ENCODE measurements at regions of chr2 and their contacts with region 1.

Region 1: DNA sequence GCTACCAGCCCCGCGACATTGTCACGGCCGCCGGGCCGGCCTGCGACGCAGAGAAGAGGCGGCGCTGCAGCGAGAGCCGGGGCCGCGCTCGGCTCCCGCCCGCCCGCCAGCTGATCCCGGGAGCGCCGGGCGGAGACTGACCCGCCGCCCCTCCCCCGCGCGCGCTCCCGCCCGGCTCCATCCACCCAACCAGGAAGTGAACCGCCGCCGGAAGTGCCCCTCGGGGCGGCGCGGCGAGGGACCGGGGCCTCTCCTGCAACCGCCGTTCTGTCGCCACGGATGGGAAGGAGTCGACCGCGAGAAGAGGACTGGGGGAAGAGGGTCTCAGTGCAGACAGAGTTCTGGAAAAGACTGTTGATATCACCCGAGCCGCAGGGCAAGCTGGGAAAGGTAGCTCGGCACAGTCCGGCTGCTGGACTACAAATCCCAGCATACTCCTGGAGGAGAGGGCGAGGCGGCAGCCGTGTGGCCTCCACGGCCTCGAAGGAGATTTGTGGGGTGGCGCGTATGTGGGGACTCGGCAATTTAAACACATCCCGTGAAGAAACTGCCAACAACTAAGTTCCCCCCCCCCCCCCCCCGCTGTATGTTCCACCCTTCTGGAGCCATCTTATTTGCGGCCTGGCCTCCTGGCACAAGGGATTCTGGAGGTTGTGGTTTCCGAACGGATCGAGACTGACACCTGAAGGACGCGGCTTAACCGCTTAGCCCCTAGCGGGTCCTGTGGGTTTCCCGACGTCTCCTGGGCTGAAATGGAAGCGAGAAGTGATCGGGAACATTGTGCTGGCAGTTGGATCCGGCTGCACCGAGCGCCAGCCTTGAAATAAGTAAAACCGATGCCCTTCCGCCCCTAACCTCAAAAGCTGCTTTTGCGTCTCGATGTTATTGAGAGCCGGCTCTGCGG is at the start of gene AAK1:
- DNase-seq: peak; percentile 64 to 91 (median 78)
- ATAC-seq: peak; percentile 40
- H3K4me3 ChIP-seq: peak within 1 kb of the TSS; percentile 85
- H3K4me3 Mint-ChIP-seq: peak within 1 kb of the TSS; percentile 99
- H3K27ac ChIP-seq: peak within 1 kb of the TSS; percentile 87 to 90
- H3K27ac Mint-ChIP-seq: peak within 1 kb of the TSS; percentile 95
- H3K4me1 ChIP-seq: peaks cover 56% of the 10 kb centered on the region
- H3K4me1 Mint-ChIP-seq: peaks cover 67% of the 10 kb centered on the region
- H3K27me3 ChIP-seq: no peaks in the 10 kb centered on the region
- H3K27me3 Mint-ChIP-seq: no peaks in the 10 kb centered on the region
- CTCF ChIP-seq: no peak
- total RNA-seq, gene AAK1: 201 to 208 TPM

Region 2: DNA sequence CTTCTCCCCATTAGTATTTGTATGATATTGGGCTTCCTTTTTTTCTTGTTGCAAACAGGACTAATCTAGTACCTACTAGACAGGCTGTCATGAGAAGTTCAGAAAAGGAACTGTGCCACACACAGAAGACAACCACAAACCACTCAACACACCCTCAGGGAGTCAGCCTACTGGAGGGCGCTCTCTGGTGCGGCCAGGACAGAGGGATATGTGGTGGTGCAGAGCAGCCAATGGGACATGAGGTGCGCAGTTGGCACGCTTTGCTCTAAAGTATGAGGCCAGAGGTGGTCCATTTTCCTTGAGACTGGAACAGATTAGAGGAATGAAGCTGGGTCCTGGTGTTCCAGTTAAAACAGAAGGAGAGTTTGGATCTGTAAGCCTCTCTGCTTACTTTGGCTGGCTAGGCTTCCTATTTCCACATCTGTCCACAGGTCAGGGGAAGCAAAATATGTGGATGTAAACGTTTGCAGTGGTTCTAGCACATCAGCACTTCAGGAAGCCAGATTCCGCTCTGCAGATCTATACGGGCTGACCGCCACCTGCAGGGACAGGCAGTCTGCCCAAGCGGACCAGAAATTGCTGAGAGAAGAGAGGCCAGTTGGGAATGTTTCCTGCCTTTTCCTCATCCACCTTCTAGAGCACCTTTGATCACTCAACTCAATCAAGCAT is 370.9 kb before region 1 on chr2:
- CTCF ChIA-PET with region 1: no interaction called
- POLR2A ChIA-PET with region 1: no interaction called
- intact Hi-C with region 1: no loop called
- DNase-seq: peak in 2 of 14 experiments; percentile 1 to 12
- ATAC-seq: no peak
- H3K4me3 ChIP-seq: no peak overlapping the region
- H3K4me3 Mint-ChIP-seq: no peak overlapping the region
- H3K27ac ChIP-seq: no peak overlapping the region
- H3K27ac Mint-ChIP-seq: no peak overlapping the region
- H3K4me1 ChIP-seq: no peaks in the 10 kb centered on the region
- H3K4me1 Mint-ChIP-seq: no peaks in the 10 kb centered on the region
- H3K27me3 ChIP-seq: peaks cover 12 to 19% of the 10 kb centered on the region in 2 experiments
- H3K27me3 Mint-ChIP-seq: peaks cover 51% of the 10 kb centered on the region
- CTCF ChIP-seq: no peak

Region 3: GRCh38 chr2:69386789-69387734 is 256.8 kb before region 1 on chr2 and contains the start of gene GFPT1:
- CTCF ChIA-PET with region 1: no interaction called
- POLR2A ChIA-PET with region 1: no interaction called
- intact Hi-C with region 1: loop called in 1 of 2 experiments (anchors 10 kb)
- DNase-seq: peak; percentile 84 to 97 (median 92)
- ATAC-seq: peak; percentile 97
- H3K4me3 ChIP-seq: peak within 1 kb of the TSS; percentile 62
- H3K4me3 Mint-ChIP-seq: peak within 1 kb of the TSS; percentile 89
- H3K27ac ChIP-seq: peak within 1 kb of the TSS; percentile 39 to 58
- H3K27ac Mint-ChIP-seq: peak within 1 kb of the TSS; percentile 79
- H3K4me1 ChIP-seq: peaks cover 22% of the 10 kb centered on the region
- H3K4me1 Mint-ChIP-seq: peaks cover 48% of the 10 kb centered on the region
- H3K27me3 ChIP-seq: no peaks in the 10 kb centered on the region
- H3K27me3 Mint-ChIP-seq: no peaks in the 10 kb centered on the region
- CTCF ChIP-seq: no peak
- total RNA-seq, gene GFPT1: 17.6 to 18.3 TPM

Region 4: DNA sequence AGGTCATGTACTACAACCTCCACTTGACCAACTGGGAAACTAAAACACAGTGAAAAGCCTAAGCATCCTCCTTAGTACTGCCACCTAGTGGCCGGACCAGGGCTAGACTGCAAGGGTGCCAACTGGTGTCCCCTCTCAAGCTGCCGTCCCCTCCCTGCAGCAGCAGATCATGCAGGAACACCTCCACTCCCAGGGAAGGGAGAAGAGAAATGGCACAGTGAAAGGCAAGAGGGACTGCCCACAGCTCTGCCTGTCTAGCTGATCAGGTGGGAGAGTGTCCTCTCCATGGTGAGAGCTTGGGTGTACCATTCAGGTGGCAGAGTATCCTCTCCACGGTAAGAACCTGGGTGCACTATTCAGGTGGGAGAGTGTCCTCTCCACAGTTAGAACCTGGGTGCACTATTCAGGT is 78.4 kb before region 1 on chr2:
- CTCF ChIA-PET with region 1: interaction called, 19 read pairs
- POLR2A ChIA-PET with region 1: interaction called, 29 read pairs
- intact Hi-C with region 1: loop called (anchors 2 to 5 kb)
- DNase-seq: peak; percentile 41 to 82 (median 62)
- ATAC-seq: peak; percentile 77
- H3K4me3 ChIP-seq: no peak overlapping the region
- H3K4me3 Mint-ChIP-seq: peak overlapping the region; percentile 65
- H3K27ac ChIP-seq: no peak overlapping the region
- H3K27ac Mint-ChIP-seq: peak overlapping the region; percentile 82
- H3K4me1 ChIP-seq: peaks cover 59% of the 10 kb centered on the region
- H3K4me1 Mint-ChIP-seq: peaks cover 96% of the 10 kb centered on the region
- H3K27me3 ChIP-seq: no peaks in the 10 kb centered on the region
- H3K27me3 Mint-ChIP-seq: no peaks in the 10 kb centered on the region
- CTCF ChIP-seq: peak; percentile 94

Region 5: GRCh38 chr2:69616756-69617155 is 27.1 kb before region 1 on chr2:
- CTCF ChIA-PET with region 1: interaction called, 7 read pairs
- POLR2A ChIA-PET with region 1: interaction called, 14 read pairs
- intact Hi-C with region 1: loop called in 1 of 2 experiments (anchors 2 kb)
- DNase-seq: peak in 9 of 14 experiments; percentile 8 to 75 (median 22)
- ATAC-seq: peak; percentile 72
- H3K4me3 ChIP-seq: no peak overlapping the region
- H3K4me3 Mint-ChIP-seq: peak overlapping the region; percentile 40
- H3K27ac ChIP-seq: no peak overlapping the region
- H3K27ac Mint-ChIP-seq: no peak overlapping the region
- H3K4me1 ChIP-seq: peaks cover 83% of the 10 kb centered on the region
- H3K4me1 Mint-ChIP-seq: peaks cover 45% of the 10 kb centered on the region
- H3K27me3 ChIP-seq: no peaks in the 10 kb centered on the region
- H3K27me3 Mint-ChIP-seq: no peaks in the 10 kb centered on the region
- CTCF ChIP-seq: no peak

Region 6: GRCh38 chr2:69677914-69678313 is 34.1 kb after region 1 on chr2:
- CTCF ChIA-PET with region 1: interaction called, 3 read pairs
- POLR2A ChIA-PET with region 1: interaction called, 62 read pairs
- intact Hi-C with region 1: no loop called
- DNase-seq: no peak
- ATAC-seq: no peak
- H3K4me3 ChIP-seq: no peak overlapping the region
- H3K4me3 Mint-ChIP-seq: no peak overlapping the region
- H3K27ac ChIP-seq: no peak overlapping the region
- H3K27ac Mint-ChIP-seq: no peak overlapping the region
- H3K4me1 ChIP-seq: peaks cover 3% of the 10 kb centered on the region
- H3K4me1 Mint-ChIP-seq: peaks cover 33% of the 10 kb centered on the region
- H3K27me3 ChIP-seq: no peaks in the 10 kb centered on the region
- H3K27me3 Mint-ChIP-seq: no peaks in the 10 kb centered on the region
- CTCF ChIP-seq: no peak

Region 7: DNA sequence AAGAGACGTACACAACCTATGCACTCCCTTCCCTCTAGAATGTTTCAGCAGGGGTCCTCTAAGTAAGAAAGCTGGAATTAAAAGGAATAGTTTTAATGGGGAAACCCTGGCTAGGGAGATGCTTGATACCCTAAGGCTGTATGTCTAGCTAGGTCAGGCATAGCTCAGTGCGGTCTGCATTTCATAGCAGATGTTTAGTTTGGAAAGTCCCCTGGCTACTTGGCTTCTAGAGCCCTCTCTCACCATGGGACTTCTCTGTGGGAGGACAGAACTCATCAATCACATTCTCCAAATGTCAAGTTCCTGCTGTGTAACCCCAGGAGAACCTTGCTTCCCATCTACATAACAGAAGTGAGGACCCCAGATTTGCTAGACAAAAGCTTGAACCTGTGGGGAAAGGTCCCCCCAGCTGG is 74.0 kb after region 1 on chr2:
- CTCF ChIA-PET with region 1: interaction called, 5 read pairs
- POLR2A ChIA-PET with region 1: interaction called, 51 read pairs
- intact Hi-C with region 1: loop called (anchors 1 to 2 kb)
- DNase-seq: no peak
- ATAC-seq: no peak
- H3K4me3 ChIP-seq: no peak overlapping the region
- H3K4me3 Mint-ChIP-seq: no peak overlapping the region
- H3K27ac ChIP-seq: no peak overlapping the region
- H3K27ac Mint-ChIP-seq: no peak overlapping the region
- H3K4me1 ChIP-seq: peaks cover 13% of the 10 kb centered on the region
- H3K4me1 Mint-ChIP-seq: peaks cover 17% of the 10 kb centered on the region
- H3K27me3 ChIP-seq: no peaks in the 10 kb centered on the region
- H3K27me3 Mint-ChIP-seq: no peaks in the 10 kb centered on the region
- CTCF ChIP-seq: no peak

Region 8: GRCh38 chr2:69742467-69743224 is 98.8 kb after region 1 on chr2:
- CTCF ChIA-PET with region 1: no interaction called
- POLR2A ChIA-PET with region 1: no interaction called
- intact Hi-C with region 1: no loop called
- DNase-seq: no peak
- ATAC-seq: peak; percentile 8
- H3K4me3 ChIP-seq: peak overlapping the region; percentile 78
- H3K4me3 Mint-ChIP-seq: peak overlapping the region; percentile 88
- H3K27ac ChIP-seq: no peak overlapping the region
- H3K27ac Mint-ChIP-seq: peak overlapping the region; percentile 1
- H3K4me1 ChIP-seq: peaks cover 22% of the 10 kb centered on the region
- H3K4me1 Mint-ChIP-seq: peaks cover 15% of the 10 kb centered on the region
- H3K27me3 ChIP-seq: no peaks in the 10 kb centered on the region
- H3K27me3 Mint-ChIP-seq: no peaks in the 10 kb centered on the region
- CTCF ChIP-seq: no peak

Region 9: GRCh38 chr2:69829256-69830046 is 185.6 kb after region 1 on chr2 and contains the start of gene GMCL1:
- CTCF ChIA-PET with region 1: no interaction called
- POLR2A ChIA-PET with region 1: interaction called, 13 read pairs
- intact Hi-C with region 1: no loop called
- DNase-seq: peak; percentile 97 to 100 (median 98)
- ATAC-seq: peak; percentile 93
- H3K4me3 ChIP-seq: peak within 1 kb of the TSS; percentile 74
- H3K4me3 Mint-ChIP-seq: peak within 1 kb of the TSS; percentile 99
- H3K27ac ChIP-seq: peak within 1 kb of the TSS; percentile 89 to 93
- H3K27ac Mint-ChIP-seq: peak within 1 kb of the TSS; percentile 99
- H3K4me1 ChIP-seq: peaks cover 33% of the 10 kb centered on the region
- H3K4me1 Mint-ChIP-seq: peaks cover 65% of the 10 kb centered on the region
- H3K27me3 ChIP-seq: no peaks in the 10 kb centered on the region
- H3K27me3 Mint-ChIP-seq: no peaks in the 10 kb centered on the region
- CTCF ChIP-seq: no peak
- total RNA-seq, gene GMCL1: 29.7 to 29.8 TPM

Region 10: DNA sequence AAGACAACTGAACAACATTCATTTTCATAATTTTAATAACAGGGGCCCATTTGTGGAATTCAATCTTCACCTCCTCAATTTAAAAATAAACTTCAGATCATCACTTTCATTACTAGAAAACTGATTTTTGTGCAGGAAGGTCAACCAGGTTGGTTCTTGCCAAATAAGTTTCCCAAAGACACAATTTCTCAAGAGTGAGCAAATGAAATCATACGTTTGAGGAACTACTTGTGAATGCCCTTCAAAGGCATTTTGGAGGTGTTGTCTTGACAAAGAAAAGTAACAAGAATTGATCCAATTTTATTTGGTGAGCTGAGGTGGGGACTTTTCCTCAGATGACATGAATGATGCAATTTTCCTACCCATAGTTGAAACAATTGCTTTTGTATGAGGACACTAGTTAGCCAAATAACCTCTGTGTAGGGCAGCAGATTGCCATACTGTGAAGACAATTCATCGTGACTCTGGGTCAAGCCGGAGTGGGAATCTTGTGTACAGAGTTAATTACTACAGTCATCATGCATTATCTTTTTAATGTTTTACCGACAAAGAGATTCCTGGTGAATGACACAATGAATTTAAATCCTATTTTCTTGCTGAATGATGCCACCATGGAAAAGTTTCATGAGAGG is 788.0 kb after region 1 on chr2:
- CTCF ChIA-PET with region 1: no interaction called
- POLR2A ChIA-PET with region 1: no interaction called
- intact Hi-C with region 1: no loop called
- DNase-seq: no peak
- ATAC-seq: no peak
- H3K4me3 ChIP-seq: no peak overlapping the region
- H3K4me3 Mint-ChIP-seq: no peak overlapping the region
- H3K27ac ChIP-seq: no peak overlapping the region
- H3K27ac Mint-ChIP-seq: no peak overlapping the region
- H3K4me1 ChIP-seq: no peaks in the 10 kb centered on the region
- H3K4me1 Mint-ChIP-seq: peaks cover 8% of the 10 kb centered on the region
- H3K27me3 ChIP-seq: no peaks in the 10 kb centered on the region
- H3K27me3 Mint-ChIP-seq: no peaks in the 10 kb centered on the region
- CTCF ChIP-seq: no peak